Activated CD4-positive, alpha-beta memory T cell treated with anti-CD3 and anti-CD28 coated beads, Interleukin-2, amount 10 ng/mL, durations not matched to agents 7 days and 5 days (primary cell): ENCODE measurements at regions of chr7 and their contacts with region 1.

Region 1: GRCh38 chr7:32891800-32892520 is 400 bp upstream of the KBTBD2 start:
- DNase-seq: peak; percentile 97
- H3K4me3 Mint-ChIP-seq: peak overlapping the region; percentile 79
- H3K27ac Mint-ChIP-seq: peak overlapping the region; percentile 92
- H3K4me1 Mint-ChIP-seq: peaks cover 49% of the 10 kb centered on the region
- H3K27me3 Mint-ChIP-seq: no peaks in the 10 kb centered on the region

Region 2: DNA sequence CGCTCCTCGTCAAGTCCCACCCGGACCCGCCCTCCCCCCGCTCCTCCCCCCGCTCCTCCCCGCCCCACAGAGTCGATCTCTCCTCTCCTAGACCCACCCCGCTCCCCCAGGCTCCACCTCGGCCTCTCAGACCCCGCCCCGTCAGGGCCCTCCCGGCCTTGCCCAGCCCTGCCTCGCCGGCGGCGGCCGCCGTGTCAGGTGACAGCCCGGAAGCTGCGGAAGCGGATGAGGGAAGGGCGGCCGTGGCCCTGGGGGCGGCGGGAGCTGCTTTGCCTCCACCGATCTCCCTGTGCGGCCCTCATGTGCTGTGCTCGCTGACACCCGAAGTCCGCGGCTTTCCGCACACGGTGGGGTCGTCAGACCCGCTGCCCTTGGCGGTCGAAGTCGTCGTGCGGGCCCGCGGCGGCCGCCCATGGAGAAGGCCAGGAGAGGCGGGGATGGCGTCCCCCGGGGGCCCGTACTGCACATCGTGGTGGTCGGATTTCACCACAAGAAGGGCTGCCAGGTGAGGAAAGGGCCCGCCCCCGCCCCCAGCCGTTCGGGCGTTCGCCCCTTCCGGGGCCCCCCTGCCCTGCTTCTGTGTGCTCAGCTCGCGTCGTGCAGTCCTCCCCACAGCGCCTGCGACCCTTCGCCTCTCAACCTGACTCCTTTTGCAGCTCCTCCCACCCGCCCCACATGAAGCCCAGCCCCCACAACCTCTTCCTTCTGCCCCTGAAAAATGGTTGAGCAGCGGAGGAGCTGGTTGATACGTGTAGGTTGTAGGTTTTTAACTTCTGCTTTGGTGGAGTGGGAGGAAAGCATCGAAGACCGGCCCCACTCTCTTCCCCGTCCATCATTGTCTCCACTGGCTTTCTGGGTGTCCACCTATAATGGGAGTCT is 396.4 kb before region 1 on chr7 and contains the start of gene AVL9:
- CTCF ChIA-PET with region 1: no interaction called
- POLR2A ChIA-PET with region 1: interaction called, 17 read pairs
- DNase-seq: peak; percentile 99
- H3K4me3 Mint-ChIP-seq: peak within 1 kb of the TSS; percentile 88
- H3K27ac Mint-ChIP-seq: peak within 1 kb of the TSS; percentile 96
- H3K4me1 Mint-ChIP-seq: peaks cover 45% of the 10 kb centered on the region
- H3K27me3 Mint-ChIP-seq: no peaks in the 10 kb centered on the region
- total RNA-seq, gene AVL9: 38.7 to 40.8 TPM

Region 3: GRCh38 chr7:32879460-32879859 is 12.5 kb before region 1 on chr7:
- CTCF ChIA-PET with region 1: interaction called, 3 read pairs
- POLR2A ChIA-PET with region 1: interaction called, 52 read pairs
- DNase-seq: no peak
- H3K4me3 Mint-ChIP-seq: no peak overlapping the region
- H3K27ac Mint-ChIP-seq: no peak overlapping the region
- H3K4me1 Mint-ChIP-seq: peaks cover 33% of the 10 kb centered on the region
- H3K27me3 Mint-ChIP-seq: no peaks in the 10 kb centered on the region

Region 4: DNA sequence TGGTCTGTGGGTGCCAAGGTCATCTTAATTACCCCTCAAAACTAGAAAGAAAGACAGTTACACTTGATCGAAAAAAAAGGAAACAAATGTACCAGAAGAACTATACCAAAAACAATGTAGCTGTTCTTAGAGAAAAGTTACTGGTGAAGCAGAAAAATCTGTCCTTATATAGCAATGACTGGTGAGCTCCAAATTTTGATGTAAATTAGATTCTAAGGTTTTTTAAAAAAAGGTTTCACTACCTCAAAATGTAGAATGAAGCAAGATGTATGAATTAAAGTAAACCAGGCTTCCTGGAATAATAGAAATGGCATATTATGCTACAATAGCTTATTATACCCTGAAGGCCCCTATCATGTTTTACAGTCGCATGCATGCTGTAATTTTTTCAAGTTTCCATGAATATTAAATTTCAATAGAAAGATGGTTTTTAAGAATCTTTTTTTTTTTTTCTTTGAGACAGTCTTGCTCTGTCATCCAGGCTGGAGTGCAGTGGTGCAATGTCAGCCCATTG is 36.9 kb after region 1 on chr7:
- CTCF ChIA-PET with region 1: no interaction called
- POLR2A ChIA-PET with region 1: no interaction called
- DNase-seq: no peak
- H3K4me3 Mint-ChIP-seq: no peak overlapping the region
- H3K27ac Mint-ChIP-seq: no peak overlapping the region
- H3K4me1 Mint-ChIP-seq: no peaks in the 10 kb centered on the region
- H3K27me3 Mint-ChIP-seq: no peaks in the 10 kb centered on the region

Region 5: DNA sequence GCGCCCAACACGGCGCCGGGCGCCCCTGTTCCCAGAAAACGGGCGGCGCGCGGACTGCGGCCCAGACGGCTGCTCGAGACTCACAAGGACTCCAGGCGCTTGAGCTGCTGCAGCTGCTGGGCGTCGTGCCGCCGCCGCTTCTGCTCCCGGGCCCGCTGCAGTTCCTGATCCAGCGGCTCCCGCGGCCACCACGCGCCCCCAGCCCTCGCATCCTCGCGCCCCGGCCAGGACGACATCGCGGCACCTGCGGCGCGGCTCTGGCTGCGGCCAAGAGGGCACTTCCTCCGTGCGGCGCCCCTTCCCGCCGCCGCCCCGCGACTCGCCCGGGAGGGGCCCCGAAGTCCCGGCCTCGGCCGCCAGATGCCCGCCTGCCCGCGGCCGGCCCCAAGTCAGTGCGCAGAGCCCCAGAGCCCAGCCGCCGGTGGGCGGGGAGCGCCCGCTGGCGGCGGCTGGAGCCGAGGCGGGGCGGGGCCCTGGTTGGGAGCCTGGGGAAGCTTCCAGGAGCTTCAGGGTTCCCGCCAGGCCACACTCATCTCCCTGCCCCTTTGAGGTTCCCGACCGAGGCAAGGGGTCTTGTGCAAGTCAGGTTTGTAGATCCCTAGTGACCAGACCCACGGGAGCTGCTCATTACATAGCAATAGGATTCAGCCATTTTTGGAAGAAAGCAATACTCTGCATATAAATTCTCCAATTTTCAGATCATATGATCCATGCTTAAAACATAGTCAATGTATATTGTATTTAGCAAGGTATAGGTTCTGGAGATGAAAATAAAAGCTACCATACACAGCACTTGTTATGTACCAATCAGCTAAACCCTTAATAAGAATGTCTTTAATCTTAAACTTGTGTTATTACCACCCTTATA is 51.1 kb after region 1 on chr7:
- CTCF ChIA-PET with region 1: interaction called, 24 read pairs
- POLR2A ChIA-PET with region 1: interaction called, 70 read pairs
- DNase-seq: peak; percentile 73
- H3K4me3 Mint-ChIP-seq: peak overlapping the region; percentile 90
- H3K27ac Mint-ChIP-seq: no peak overlapping the region
- H3K4me1 Mint-ChIP-seq: peaks cover 20% of the 10 kb centered on the region
- H3K27me3 Mint-ChIP-seq: peaks cover 12% of the 10 kb centered on the region

Region 6: DNA sequence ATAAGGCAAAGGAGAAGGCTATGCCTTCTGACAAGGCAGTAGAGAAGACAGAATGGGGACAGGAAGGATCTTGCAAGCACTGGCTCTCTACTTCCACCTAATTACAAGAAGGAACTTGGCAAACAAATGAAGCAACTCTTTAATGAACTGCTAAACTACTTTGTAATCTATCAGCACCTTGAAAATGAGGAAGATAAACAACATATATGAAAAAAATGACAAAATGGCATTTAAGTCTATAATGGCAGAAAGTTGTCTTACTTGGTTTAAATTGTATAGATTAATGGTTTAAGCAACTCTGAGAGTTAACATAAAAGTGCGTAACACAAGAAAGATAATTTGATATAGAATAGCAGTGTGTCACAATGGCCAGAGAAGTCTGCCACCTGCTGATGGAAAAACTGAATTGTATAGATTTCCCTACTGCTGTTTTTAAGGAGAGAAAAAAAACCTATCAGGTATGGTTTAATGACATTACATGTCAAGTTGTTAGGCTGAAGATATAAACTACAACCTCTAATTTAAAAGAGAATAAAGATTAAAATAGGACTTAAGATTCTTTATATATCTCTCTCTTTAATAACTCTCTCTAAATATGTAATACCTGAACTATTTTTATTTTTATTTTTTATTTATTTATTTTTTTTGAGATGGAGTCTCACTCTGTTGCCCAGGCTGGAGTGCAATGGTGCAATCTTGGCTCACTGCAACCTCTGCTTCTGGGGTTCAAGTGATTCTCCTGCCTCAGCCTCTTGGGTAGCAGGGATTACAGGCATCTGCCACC is 158.8 kb after region 1 on chr7:
- CTCF ChIA-PET with region 1: interaction called, 3 read pairs
- POLR2A ChIA-PET with region 1: interaction called, 12 read pairs
- DNase-seq: no peak
- H3K4me3 Mint-ChIP-seq: no peak overlapping the region
- H3K27ac Mint-ChIP-seq: no peak overlapping the region
- H3K4me1 Mint-ChIP-seq: peaks cover 49% of the 10 kb centered on the region
- H3K27me3 Mint-ChIP-seq: no peaks in the 10 kb centered on the region